PC-3 (cell line): ENCODE measurements at regions of chr2 and their contacts with region 1.

Region 1: DNA sequence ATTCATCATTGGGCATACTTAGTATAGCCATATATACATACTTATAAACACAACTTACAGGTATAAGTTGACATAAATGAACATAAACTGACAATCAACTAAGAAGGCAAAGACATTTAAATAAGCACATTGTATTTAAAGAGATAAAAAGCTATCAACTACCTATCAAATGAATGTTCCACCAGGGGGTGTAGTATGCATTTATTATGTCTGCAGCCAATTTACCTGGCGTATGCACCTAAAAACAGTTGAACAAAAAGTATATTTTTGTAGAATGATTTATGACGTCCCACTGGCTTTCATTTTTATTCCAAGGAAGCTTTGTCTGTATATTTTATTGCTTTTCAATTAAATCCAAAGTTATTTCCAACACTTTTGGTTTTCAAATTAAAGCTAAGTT is 323.5 kb downstream of the AFF3 start:
- DNase-seq: peak; percentile 71
- ATAC-seq: peak; percentile 14; the same call in 1 of the 2 replicates
- H3K4me3 ChIP-seq: no peak overlapping the region
- H3K27ac ChIP-seq: no peak overlapping the region
- H3K4me1 ChIP-seq: peaks cover 7% of the 10 kb centered on the region; the same call in 1 of the 2 replicates
- H3K27me3 ChIP-seq: no peaks in the 10 kb centered on the region
- CTCF ChIP-seq: peak; percentile 71

Region 2: DNA sequence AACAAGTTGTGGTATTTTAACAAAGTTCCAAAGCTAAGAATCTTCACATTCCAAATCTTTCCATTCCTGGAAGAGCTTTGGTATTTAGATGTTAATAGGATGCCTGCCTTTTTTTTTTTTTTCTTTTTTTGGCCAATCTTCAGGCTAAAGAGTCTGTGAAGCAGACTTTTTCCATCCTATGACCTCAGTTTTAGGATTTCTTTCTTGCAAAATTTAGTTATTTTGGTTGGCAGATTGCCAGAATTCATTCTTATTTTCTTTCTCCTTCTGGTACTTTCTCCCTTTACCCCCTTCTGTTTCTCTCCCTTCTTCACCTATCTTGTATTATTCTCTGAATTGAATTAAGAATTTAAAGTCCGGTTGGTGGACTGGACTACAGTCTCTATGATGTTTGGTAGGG is 111.2 kb before region 1 on chr2:
- CTCF ChIA-PET with region 1: no interaction called
- POLR2A ChIA-PET with region 1: no interaction called
- intact Hi-C with region 1: no loop called
- DNase-seq: no peak
- ATAC-seq: no peak
- H3K4me3 ChIP-seq: no peak overlapping the region
- H3K27ac ChIP-seq: no peak overlapping the region
- H3K4me1 ChIP-seq: no peaks in the 10 kb centered on the region
- H3K27me3 ChIP-seq: no peaks in the 10 kb centered on the region
- CTCF ChIP-seq: no peak

Region 3: GRCh38 chr2:99725820-99726219 is 93.0 kb before region 1 on chr2:
- CTCF ChIA-PET with region 1: no interaction called
- POLR2A ChIA-PET with region 1: no interaction called
- intact Hi-C with region 1: loop called (anchors 1 kb)
- DNase-seq: peak; percentile 27
- ATAC-seq: no peak
- H3K4me3 ChIP-seq: no peak overlapping the region
- H3K27ac ChIP-seq: no peak overlapping the region
- H3K4me1 ChIP-seq: no peaks in the 10 kb centered on the region
- H3K27me3 ChIP-seq: no peaks in the 10 kb centered on the region
- CTCF ChIP-seq: peak; percentile 60

Region 4: DNA sequence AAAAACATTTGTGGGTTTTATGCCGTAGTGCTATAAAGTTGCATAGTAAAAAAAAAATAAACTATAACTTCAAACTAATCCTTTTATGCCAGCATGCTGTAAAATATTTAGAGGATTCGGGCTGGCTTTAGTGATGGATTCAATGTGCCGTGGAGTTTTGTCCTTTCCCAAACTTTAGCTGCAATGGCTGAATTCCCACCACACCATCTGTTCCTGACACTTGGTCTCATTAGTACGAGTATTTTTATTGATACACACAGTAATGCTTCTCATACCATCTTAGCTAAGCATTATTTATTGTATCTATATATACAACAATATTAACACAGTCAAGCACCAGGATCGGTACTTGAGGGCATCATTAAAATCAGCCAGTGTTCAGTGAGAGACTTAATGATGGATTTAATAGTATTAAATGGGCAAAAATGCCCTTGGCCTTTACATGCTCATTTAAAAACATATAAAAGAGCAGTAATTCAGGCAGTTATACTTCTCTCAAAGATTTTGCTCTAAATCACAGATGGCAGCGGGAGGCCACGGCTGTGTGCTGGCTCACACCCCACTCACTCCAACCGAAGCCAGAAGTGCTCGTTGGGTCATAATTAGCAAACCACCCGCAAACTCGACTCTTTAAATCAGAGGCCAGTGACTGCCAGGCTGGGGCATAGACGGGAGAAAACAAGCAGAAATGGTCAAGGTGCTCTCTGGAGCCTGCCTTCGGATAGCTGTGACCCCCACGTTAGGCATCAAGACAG is 32.0 kb before region 1 on chr2:
- CTCF ChIA-PET with region 1: no interaction called
- POLR2A ChIA-PET with region 1: no interaction called
- intact Hi-C with region 1: no loop called
- DNase-seq: no peak
- ATAC-seq: no peak
- H3K4me3 ChIP-seq: no peak overlapping the region
- H3K27ac ChIP-seq: no peak overlapping the region
- H3K4me1 ChIP-seq: no peaks in the 10 kb centered on the region
- H3K27me3 ChIP-seq: no peaks in the 10 kb centered on the region
- CTCF ChIP-seq: no peak

Region 5: DNA sequence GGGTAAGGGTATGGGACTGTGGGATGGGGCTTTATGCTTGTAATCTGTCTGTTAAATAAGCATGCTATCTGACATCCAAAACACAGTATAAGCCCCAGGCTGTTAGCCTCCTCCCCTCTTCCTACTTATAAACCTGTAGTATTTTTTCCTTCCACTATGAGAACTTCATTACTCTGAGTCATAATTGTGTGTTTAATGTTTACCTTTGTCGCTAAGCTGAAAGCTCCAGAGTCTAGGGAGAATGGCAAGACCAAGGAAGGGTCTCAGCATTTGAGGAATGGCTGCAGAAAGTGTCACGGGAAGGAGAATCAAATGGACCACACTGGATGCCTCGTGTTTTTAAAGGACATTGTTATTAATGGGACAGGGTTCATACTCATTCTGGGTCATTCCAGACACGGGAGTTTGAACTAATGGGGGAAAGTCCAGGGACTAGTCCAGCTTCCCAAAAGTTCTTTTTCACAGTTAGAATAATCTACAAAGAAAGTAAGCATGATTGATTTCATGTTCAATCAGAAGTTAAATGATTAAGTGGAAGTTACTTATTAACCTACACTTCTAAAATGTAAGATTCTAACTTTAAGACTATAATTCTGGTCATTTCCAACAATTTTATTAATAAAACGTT is 31.4 kb after region 1 on chr2:
- CTCF ChIA-PET with region 1: no interaction called
- POLR2A ChIA-PET with region 1: no interaction called
- intact Hi-C with region 1: no loop called
- DNase-seq: peak; percentile 76
- ATAC-seq: peak; percentile 89
- H3K4me3 ChIP-seq: no peak overlapping the region
- H3K27ac ChIP-seq: no peak overlapping the region
- H3K4me1 ChIP-seq: peaks cover 5% of the 10 kb centered on the region
- H3K27me3 ChIP-seq: no peaks in the 10 kb centered on the region
- CTCF ChIP-seq: no peak

Region 6: GRCh38 chr2:99974275-99974674 is 155.4 kb after region 1 on chr2:
- CTCF ChIA-PET with region 1: no interaction called
- POLR2A ChIA-PET with region 1: no interaction called
- intact Hi-C with region 1: loop called (anchors 10 kb)
- DNase-seq: peak; percentile 52
- ATAC-seq: peak; percentile 27
- H3K4me3 ChIP-seq: peak overlapping the region; percentile 34; the same call in 1 of the 2 replicates
- H3K27ac ChIP-seq: peak overlapping the region; percentile 89
- H3K4me1 ChIP-seq: peaks cover 55% of the 10 kb centered on the region
- H3K27me3 ChIP-seq: no peaks in the 10 kb centered on the region
- CTCF ChIP-seq: no peak

Region 7: GRCh38 chr2:100242891-100243619 is 424.2 kb after region 1 on chr2:
- CTCF ChIA-PET with region 1: interaction called, 4 read pairs
- POLR2A ChIA-PET with region 1: interaction called, 3 read pairs
- intact Hi-C with region 1: loop called (anchors 1 kb)
- DNase-seq: peak; percentile 77
- ATAC-seq: peak; percentile 91
- H3K4me3 ChIP-seq: no peak overlapping the region
- H3K27ac ChIP-seq: no peak overlapping the region
- H3K4me1 ChIP-seq: 0 out of 2 replicates have a peak, but pooled peaks cover under 1% of the 10 kb centered on the region
- H3K27me3 ChIP-seq: no peaks in the 10 kb centered on the region
- CTCF ChIP-seq: peak; percentile 88